PC-9 (cell line): ENCODE measurements at regions of chr2 and their contacts with region 1.

Region 1: GRCh38 chr2:178914259-178914849 is 107.1 kb upstream of the TTN start:
- DNase-seq: peak; percentile 83 to 84
- H3K4me3 ChIP-seq: no peak overlapping the region
- H3K27ac ChIP-seq: no peak overlapping the region
- H3K4me1 ChIP-seq: peaks cover 30% of the 10 kb centered on the region
- H3K27me3 ChIP-seq: no peaks in the 10 kb centered on the region
- CTCF ChIP-seq: peak; percentile 99

Region 2: DNA sequence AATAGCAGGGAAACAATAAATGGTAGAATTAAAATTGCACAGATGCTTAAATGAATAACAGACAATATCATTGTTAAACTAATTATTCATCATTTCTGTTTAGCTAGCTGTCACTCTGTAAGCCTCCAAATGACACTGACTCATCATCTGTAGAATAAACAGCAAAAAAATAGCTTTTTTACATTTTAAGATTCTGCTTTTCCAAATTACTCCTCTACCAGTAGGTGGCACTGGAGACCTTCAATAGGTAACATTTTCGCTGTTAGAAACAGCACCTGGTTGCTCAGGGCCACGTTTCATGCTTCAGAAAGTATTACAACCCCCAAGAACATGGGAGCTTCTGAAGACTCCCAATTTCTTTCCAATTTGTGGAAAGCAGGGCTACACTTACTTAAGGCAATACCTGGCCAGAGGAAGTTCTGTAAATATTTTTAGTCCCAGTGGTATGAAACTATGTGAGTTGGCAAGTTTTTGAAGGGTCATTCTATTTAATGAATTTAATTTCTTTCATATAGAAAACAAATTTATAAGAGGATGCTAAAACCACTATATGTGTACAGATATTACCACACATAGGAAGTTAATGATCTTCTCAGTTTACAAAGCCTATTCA is 152.5 kb before region 1 on chr2:
- CTCF ChIA-PET with region 1: no interaction called
- POLR2A ChIA-PET with region 1: interaction called, 3 read pairs
- intact Hi-C with region 1: loop called (anchors 1 kb)
- DNase-seq: peak; percentile 46 to 75
- H3K4me3 ChIP-seq: no peak overlapping the region
- H3K27ac ChIP-seq: no peak overlapping the region
- H3K4me1 ChIP-seq: peaks cover 11% of the 10 kb centered on the region
- H3K27me3 ChIP-seq: no peaks in the 10 kb centered on the region
- CTCF ChIP-seq: peak; percentile 98

Region 3: DNA sequence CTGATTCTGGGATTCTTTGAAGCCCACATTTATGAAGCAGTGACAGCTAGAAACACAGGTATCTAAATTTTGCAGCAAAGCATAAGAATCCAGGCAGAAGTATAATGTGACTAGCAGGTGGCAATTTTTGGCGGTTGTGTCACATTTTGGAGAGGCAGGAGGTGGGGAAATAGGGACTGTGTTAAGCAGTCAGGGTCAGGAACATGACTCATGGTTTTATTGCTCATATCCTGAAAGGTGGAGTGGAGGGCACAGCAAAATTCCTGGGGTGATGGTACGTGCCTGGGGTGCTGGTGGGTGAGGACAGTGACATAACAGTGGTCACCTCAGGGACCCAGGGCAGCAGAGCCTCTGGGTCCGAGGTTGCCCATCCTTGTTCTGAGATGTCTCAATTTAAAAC is 43.7 kb before region 1 on chr2:
- CTCF ChIA-PET with region 1: no interaction called
- POLR2A ChIA-PET with region 1: no interaction called
- intact Hi-C with region 1: loop called (anchors 2 kb)
- DNase-seq: peak; percentile 69 to 95
- H3K4me3 ChIP-seq: no peak overlapping the region
- H3K27ac ChIP-seq: peak overlapping the region; percentile 45
- H3K4me1 ChIP-seq: peaks cover 45% of the 10 kb centered on the region
- H3K27me3 ChIP-seq: no peaks in the 10 kb centered on the region
- CTCF ChIP-seq: no peak

Region 4: GRCh38 chr2:178891265-178891958 is 22.9 kb before region 1 on chr2:
- CTCF ChIA-PET with region 1: interaction called, 5 read pairs
- POLR2A ChIA-PET with region 1: no interaction called
- intact Hi-C with region 1: loop called (anchors 1 kb)
- DNase-seq: peak; percentile 61 to 67
- H3K4me3 ChIP-seq: no peak overlapping the region
- H3K27ac ChIP-seq: no peak overlapping the region
- H3K4me1 ChIP-seq: no peaks in the 10 kb centered on the region
- H3K27me3 ChIP-seq: no peaks in the 10 kb centered on the region
- CTCF ChIP-seq: peak; percentile 100

Region 5: GRCh38 chr2:179129574-179130238 is 215.4 kb after region 1 on chr2:
- CTCF ChIA-PET with region 1: no interaction called
- POLR2A ChIA-PET with region 1: no interaction called
- intact Hi-C with region 1: loop called (anchors 10 kb)
- DNase-seq: no peak
- H3K4me3 ChIP-seq: no peak overlapping the region
- H3K27ac ChIP-seq: no peak overlapping the region
- H3K4me1 ChIP-seq: no peaks in the 10 kb centered on the region
- H3K27me3 ChIP-seq: no peaks in the 10 kb centered on the region
- CTCF ChIP-seq: peak; percentile 83

Region 6: DNA sequence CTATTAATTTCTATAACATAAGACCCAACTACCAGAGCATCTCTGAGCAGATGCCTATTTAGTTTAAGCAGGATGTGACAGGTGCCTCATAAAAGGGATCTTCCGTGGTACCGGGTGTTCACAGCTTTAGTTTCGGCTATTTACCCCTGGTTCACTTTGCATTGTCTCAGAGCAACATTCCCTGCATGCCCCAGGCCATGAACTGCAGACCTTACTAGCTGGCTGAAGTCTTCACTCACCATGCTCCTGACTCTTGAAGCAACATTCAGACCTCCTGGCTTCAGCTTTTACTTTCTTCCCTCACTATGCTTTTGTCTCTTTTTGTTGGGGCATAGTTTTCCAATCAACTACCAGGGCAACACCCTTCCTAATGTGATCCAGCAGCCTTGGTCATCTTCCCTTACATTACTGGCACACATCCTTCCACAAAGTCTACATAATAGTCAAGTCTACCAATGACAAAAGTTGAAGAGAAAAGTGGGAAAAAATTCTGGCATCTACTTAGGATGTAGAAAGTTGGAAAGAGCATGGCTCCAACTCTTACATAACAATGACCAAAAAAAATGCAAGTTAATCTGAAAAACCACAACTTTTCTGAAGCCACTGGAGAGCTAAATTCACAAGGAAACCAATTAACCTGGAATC is 251.1 kb after region 1 on chr2:
- CTCF ChIA-PET with region 1: no interaction called
- POLR2A ChIA-PET with region 1: no interaction called
- intact Hi-C with region 1: no loop called
- DNase-seq: no peak
- H3K4me3 ChIP-seq: no peak overlapping the region
- H3K27ac ChIP-seq: no peak overlapping the region
- H3K4me1 ChIP-seq: no peaks in the 10 kb centered on the region
- H3K27me3 ChIP-seq: no peaks in the 10 kb centered on the region
- CTCF ChIP-seq: no peak

Region 7: DNA sequence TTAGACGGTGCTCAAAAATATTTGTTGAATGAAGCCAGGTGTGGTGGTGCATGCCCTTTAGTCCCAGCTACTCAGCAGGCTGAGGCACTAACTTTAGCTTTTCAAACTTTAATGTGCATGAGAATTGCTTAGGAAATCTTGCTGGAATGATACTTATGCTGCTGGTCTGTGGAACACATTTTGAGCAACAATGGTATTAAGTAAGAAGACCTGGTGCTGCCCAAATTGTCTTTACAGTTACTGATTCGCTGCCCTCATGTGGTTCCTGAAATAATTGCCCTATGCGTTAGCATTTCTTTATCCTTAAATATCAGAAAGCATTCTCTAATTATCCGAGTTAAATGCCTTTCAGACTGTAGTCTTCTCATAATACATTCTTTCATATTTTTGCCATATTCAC is 426.3 kb after region 1 on chr2:
- CTCF ChIA-PET with region 1: no interaction called
- POLR2A ChIA-PET with region 1: no interaction called
- intact Hi-C with region 1: loop called (anchors 10 kb)
- DNase-seq: peak in 1 of 2 experiments; percentile 35
- H3K4me3 ChIP-seq: no peak overlapping the region
- H3K27ac ChIP-seq: no peak overlapping the region
- H3K4me1 ChIP-seq: peaks cover 22% of the 10 kb centered on the region
- H3K27me3 ChIP-seq: no peaks in the 10 kb centered on the region
- CTCF ChIP-seq: peak; percentile 72